Breast epithelium (tissue), 4 donors: ENCODE measurements at regions of chr1 and their contacts with region 1.

Region 1: DNA sequence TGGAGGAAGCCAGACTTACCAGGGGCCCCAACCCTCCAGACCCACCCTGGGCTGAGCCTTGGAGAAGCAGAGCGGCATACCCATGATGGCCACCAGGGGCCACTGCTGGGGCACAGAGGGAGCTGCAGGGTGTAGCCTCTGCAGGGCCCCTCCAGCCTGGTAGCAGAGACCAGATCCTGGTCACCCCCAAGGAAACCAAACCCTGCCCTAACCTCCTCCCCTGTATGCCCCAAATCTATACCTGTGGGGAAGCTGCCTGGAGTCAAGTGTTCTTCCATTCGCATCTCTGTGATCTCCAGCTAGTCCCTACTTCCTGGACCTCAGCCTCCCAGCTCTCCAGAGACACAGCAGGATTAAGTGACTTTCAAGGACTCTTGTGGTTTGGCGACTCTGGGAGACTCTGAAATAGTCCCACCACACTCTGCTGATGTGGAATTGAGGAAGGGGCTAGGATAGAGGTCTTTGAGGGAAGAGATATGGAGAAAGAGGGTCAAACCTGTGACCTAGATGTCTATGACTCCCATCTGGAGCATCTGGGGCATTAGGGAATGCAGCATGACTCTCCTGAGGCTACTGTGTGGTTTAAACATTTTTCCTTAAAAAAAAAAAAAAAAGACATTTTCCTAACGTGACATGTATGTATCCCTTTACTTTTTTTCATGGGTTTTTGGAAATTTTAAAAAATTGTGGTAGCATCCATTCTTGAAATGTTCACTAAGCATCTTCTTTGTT is 119.2 kb upstream of the IPO9 start:
- DNase-seq: peak; percentile 48 to 66
- H3K4me3 ChIP-seq: no peak overlapping the region
- H3K27ac ChIP-seq: peak overlapping the region in 1 of 2 donors; percentile 51
- H3K4me1 ChIP-seq: peaks cover 0 to 9% of the 10 kb centered on the region in 2 donors
- H3K27me3 ChIP-seq: no peaks in the 10 kb centered on the region
- CTCF ChIP-seq: peak; percentile 87 to 93 (median 89)
- POLR2A ChIP-seq: no peak

Region 2: DNA sequence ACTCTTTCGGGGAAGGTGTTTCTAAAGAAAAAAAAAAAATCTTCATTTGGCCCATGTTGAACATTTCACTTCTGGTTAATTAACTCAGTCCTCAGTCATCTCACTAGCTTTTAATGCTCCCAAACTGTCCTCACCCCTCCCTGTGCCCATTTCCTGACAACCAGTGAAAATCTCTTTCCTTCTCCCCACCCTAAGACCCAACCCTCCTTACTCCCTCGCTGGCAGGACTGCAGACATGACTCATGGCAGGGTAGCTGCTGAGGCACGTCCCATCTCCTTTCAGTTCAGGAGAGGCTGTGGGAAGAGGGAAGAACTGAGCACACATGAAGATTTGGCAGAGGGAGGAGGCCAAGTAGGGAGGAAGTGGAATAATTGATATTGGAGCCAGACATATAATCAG is 413.9 kb before region 1 on chr1:
- intact Hi-C with region 1: no loop called
- DNase-seq: no peak
- H3K4me3 ChIP-seq: no peak overlapping the region
- H3K27ac ChIP-seq: peak overlapping the region in 1 of 2 donors; percentile 36
- H3K4me1 ChIP-seq: peaks cover 5 to 7% of the 10 kb centered on the region in 2 donors
- H3K27me3 ChIP-seq: no peaks in the 10 kb centered on the region
- CTCF ChIP-seq: no peak
- POLR2A ChIP-seq: no peak

Region 3: DNA sequence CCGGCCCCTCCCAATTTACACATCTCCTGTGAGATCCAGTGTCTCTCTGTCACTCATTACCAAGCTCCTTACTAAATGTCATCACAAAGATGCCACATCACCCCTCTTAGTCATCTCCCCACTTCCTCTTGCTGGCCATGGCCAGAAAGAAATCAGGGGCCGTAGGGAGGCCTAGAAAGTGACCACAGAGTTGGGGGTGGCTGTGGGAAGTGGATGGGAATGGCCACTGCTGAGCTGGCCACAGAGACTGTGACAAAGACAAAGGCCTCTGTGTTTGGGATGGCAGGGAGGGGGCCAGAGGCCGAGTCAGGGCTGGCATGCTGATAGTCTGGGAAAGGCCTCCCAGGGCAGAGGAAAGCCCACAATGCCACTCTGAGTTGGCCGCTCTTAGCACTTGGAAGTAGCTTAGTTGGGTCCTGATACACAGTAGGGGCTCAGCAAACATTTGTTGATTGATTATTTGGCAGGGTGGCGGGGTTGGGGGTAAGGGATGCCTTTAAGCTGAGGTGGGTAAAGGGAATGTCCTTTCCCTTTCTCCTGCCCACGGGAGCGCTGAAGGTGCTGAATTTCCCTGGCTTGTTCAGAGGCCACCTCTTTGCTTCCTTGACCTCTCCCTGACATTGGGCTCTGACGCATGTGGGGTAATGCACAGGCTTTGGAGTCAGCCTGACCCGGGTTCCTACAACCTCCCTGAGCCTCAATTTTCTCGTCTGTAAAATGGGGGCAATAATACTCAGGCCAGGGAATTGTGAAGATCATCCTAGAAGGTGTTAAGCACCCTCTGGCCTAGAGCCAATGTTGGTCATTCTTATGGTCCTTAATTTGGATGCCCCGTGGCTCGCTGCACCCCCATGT is 157.6 kb before region 1 on chr1:
- intact Hi-C with region 1: loop called (anchors 1 kb)
- DNase-seq: no peak
- H3K4me3 ChIP-seq: no peak overlapping the region
- H3K27ac ChIP-seq: peak overlapping the region; percentile 6 to 45
- H3K4me1 ChIP-seq: peaks cover 0 to 3% of the 10 kb centered on the region in 2 donors
- H3K27me3 ChIP-seq: no peaks in the 10 kb centered on the region
- CTCF ChIP-seq: no peak
- POLR2A ChIP-seq: no peak

Region 4: DNA sequence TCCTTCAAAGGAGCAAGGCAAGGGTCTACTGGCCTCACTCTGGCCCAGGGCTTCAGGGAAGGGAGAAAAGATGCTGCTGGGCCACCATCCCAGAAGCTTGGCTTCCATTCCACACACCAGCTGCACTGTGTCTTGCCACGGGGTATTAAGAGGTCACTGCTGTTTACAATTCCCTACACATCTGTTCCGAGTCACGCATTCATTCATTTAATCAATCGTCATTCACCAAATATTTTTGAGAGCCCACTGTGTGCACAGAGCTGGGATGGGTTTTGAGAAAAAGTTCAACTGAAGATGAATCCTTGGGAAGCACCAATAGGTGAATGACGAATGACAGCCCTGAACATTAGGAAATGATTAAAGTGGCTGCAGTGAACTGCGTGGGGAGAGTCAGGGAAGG is 69.1 kb before region 1 on chr1:
- intact Hi-C with region 1: no loop called
- DNase-seq: no peak
- H3K4me3 ChIP-seq: no peak overlapping the region
- H3K27ac ChIP-seq: peak overlapping the region in 1 of 2 donors; percentile 28
- H3K4me1 ChIP-seq: no peaks in the 10 kb centered on the region
- H3K27me3 ChIP-seq: no peaks in the 10 kb centered on the region
- CTCF ChIP-seq: no peak
- POLR2A ChIP-seq: no peak

Region 5: DNA sequence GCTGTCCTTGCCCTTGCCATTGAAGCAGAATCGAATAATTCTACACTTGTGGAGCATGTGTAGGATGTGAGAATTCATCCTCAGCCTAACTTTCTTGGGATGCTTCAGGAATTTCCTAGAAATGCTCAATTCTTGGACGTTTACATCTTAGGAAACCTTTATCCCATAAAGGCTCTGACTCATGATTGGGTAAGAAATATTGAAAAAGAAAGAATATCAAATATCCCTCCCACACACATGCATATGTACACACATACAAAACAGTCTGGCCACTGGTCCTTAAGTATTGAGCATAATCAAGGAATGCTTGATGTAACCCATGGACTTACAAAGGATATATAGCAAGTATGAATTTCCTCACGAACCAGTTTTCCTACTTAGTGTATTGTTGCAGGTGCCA is 35.3 kb after region 1 on chr1:
- intact Hi-C with region 1: loop called (anchors 2 kb)
- DNase-seq: no peak
- H3K4me3 ChIP-seq: no peak overlapping the region
- H3K27ac ChIP-seq: no peak overlapping the region
- H3K4me1 ChIP-seq: peaks cover 2 to 7% of the 10 kb centered on the region in 2 donors
- H3K27me3 ChIP-seq: no peaks in the 10 kb centered on the region
- CTCF ChIP-seq: no peak
- POLR2A ChIP-seq: no peak

Region 6: GRCh38 chr1:201785291-201785690 is 75.6 kb after region 1 on chr1:
- intact Hi-C with region 1: loop called (anchors 2 kb)
- DNase-seq: no peak
- H3K4me3 ChIP-seq: no peak overlapping the region
- H3K27ac ChIP-seq: no peak overlapping the region
- H3K4me1 ChIP-seq: no peaks in the 10 kb centered on the region
- H3K27me3 ChIP-seq: no peaks in the 10 kb centered on the region
- CTCF ChIP-seq: no peak
- POLR2A ChIP-seq: no peak

Region 7: GRCh38 chr1:201818971-201819750 is 109.4 kb after region 1 on chr1:
- intact Hi-C with region 1: no loop called
- DNase-seq: no peak
- H3K4me3 ChIP-seq: no peak overlapping the region
- H3K27ac ChIP-seq: no peak overlapping the region
- H3K4me1 ChIP-seq: no peaks in the 10 kb centered on the region
- H3K27me3 ChIP-seq: no peaks in the 10 kb centered on the region
- CTCF ChIP-seq: no peak
- POLR2A ChIP-seq: no peak

Region 8: GRCh38 chr1:201970334-201971159 is 260.8 kb after region 1 on chr1:
- intact Hi-C with region 1: no loop called
- DNase-seq: peak in 1 of 2 donors; percentile 14
- H3K4me3 ChIP-seq: no peak overlapping the region
- H3K27ac ChIP-seq: no peak overlapping the region
- H3K4me1 ChIP-seq: no peaks in the 10 kb centered on the region
- H3K27me3 ChIP-seq: no peaks in the 10 kb centered on the region
- CTCF ChIP-seq: no peak
- POLR2A ChIP-seq: no peak